MCF 10A (cell line): ENCODE measurements at regions of chr1 and their contacts with region 1.

Region 1: DNA sequence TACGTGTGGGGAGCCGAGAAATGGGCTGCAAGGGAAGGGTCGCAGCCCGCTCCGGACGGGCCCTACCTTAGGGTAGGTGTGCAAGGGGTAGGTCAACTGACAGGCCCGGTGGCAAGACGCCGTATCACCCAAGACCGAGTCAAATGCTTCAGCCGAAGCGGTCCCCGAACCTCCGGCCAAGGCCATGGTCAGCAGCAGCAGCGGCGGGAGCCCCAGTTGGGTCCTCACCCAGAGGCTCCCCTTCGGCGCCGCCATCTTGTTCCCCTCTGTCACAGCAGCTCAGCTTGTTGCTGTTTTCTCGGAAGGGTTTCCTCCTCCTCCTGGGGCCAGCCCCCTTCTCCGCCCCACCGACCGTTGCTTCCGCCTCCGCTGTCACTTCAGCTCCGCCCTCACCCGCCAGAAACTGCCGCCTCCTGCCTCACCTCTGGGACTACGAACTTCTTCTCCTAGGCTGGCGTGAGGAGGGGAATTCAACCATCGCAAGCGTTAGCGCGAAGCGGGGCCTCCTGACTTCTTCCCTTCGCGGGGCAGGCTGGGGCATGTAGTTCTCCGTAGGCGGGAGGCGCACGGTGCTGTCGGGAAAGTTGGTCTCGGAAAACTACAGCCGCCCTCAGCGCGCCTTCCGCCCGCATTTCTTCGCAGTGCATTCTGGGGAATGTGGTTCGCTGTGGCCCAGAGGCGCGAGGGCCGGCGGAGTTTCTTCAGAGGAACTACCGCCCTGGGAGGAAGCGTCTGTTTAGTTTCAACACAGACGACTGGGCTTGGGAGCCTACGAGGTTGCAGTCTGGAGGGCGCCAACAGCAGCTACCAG is at the starts of genes TCEANC2 and TMEM59:
- DNase-seq: peak; percentile 99
- H3K4me3 Mint-ChIP-seq: no peak within 1 kb of the TSS
- H3K27ac Mint-ChIP-seq: no peak within 1 kb of the TSS
- H3K4me1 Mint-ChIP-seq: peaks cover 13% of the 10 kb centered on the region
- H3K27me3 Mint-ChIP-seq: no peaks in the 10 kb centered on the region
- CTCF ChIP-seq: no peak
- total RNA-seq, gene TCEANC2: 3.6 and 6.0 TPM in 2 replicates
- total RNA-seq, gene TMEM59: 192 and 231 TPM in 2 replicates

Region 2: DNA sequence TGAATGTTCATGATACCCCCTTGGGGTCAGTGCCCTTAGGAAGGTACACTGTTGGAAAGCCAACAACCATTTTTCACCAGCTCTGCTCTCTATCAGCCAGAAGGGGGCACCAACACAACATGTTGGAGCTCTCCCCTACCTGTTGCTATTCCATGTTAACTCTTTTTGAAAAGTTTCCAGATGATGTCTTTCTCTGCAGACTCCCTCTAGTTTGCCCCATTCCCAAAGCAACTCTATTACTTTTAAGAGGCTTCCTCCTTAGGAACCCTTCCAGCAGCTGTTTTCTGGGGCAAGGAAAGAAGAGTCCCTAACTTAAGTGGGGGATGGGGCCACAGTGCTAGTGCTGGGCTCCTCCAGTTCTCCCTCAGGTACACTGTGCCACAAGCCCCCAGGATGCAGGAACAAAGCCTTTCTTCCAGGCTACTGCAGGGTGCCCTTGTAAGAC is 192.2 kb before region 1 on chr1:
- CTCF ChIA-PET with region 1: interaction called, 9 read pairs
- POLR2A ChIA-PET with region 1: interaction called, 8 read pairs
- intact Hi-C with region 1: loop called (anchors 1 kb)
- DNase-seq: peak; percentile 75
- H3K4me3 Mint-ChIP-seq: no peak overlapping the region
- H3K27ac Mint-ChIP-seq: no peak overlapping the region
- H3K4me1 Mint-ChIP-seq: no peaks in the 10 kb centered on the region
- H3K27me3 Mint-ChIP-seq: no peaks in the 10 kb centered on the region
- CTCF ChIP-seq: peak; percentile 82

Region 3: DNA sequence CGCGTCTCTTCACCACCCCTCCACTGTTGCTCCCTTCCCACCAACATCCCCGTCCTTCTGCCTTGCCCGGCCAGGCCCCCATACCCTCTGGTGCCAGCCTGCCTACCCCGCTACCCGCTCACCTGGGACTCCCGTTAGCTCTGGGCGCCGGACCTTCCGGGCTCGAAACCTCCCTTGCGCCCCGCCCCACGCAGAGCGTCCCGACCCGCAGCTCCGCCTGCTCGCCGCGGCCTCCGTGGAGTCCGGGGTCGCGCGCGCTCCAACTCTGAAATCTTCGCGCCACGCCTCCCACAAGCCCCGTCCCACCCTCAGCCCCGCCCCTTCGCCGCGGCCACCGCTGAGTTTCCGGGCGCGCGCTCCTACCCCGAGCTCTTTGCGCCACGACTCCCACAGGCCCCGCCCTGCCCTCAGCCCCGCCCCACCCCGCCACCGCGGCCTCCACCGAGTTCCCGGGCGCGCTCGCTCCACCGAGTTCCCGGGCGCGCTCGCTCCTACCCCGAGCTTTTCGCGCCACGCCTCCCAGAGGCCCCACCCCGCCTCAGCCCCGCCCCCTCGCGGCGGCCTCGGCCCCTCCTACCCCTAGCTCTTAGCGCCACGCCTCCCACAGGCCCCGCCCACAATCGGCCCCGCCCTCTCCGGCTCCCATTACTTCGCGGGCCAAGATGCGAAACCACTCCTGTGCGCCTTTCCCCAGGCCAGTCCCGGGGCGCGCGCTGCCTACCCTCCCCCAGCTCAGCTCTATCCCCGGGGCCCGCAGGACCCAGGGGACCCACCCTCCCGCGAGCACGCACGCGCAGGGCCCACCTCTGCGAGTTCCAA is 107.5 kb before region 1 on chr1 and contains the start of gene IFT25:
- CTCF ChIA-PET with region 1: interaction called, 3 read pairs
- POLR2A ChIA-PET with region 1: interaction called, 22 read pairs
- intact Hi-C with region 1: no loop called
- DNase-seq: peak; percentile 95
- H3K4me3 Mint-ChIP-seq: peak within 1 kb of the TSS; percentile 85
- H3K27ac Mint-ChIP-seq: peak within 1 kb of the TSS; percentile 75
- H3K4me1 Mint-ChIP-seq: peaks cover 36% of the 10 kb centered on the region
- H3K27me3 Mint-ChIP-seq: no peaks in the 10 kb centered on the region
- CTCF ChIP-seq: no peak
- total RNA-seq, gene IFT25: 20.6 and 22.3 TPM in 2 replicates

Region 4: DNA sequence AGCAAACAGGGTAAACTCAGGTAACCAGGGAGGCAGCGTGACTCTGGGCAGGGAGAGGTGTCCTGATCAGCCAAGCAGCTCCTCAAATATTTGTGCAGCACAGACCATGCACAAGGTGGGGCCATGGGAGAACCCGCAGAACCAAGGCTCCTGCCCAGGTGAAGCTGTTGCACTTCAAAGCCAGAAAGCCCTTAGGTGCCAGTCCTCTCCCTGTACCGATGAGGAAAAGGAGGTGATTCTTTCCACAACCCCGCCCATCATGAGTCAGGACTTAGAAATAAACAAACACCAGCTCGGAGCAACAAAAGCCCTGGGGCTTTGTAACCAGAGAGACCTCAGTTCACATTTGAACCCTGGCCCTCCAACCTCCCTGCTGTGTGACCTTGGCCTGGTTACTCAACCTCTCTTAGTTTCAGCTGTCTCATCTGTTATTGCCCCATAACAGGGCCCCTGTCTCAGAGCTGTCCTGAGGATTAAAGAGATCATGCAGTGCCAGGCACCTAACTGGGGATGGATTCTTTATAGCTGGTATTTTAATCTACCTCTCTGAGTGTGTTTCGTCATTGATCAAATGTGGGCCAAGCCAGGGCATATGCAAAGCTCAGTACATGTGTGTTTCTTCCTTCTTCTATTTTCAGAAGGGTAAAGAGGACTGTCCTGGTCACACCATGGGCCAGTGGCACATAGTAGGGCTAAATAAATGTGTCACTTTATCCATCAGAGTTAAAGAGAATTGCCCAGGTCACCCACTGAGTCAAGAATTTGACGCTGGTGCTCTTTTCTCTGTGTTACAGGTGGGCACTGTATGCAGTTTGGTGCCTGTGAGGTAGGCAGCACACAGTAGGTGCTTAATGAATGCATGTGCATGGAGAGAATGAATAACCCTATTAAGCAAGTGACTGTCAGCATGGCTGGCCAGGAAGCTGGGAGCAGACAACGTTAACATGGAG is 36.6 kb before region 1 on chr1:
- CTCF ChIA-PET with region 1: interaction called, 3 read pairs
- POLR2A ChIA-PET with region 1: interaction called, 25 read pairs
- intact Hi-C with region 1: no loop called
- DNase-seq: peak; percentile 92
- H3K4me3 Mint-ChIP-seq: no peak overlapping the region
- H3K27ac Mint-ChIP-seq: peak overlapping the region; percentile 82
- H3K4me1 Mint-ChIP-seq: peaks cover 13% of the 10 kb centered on the region
- H3K27me3 Mint-ChIP-seq: peaks cover 9% of the 10 kb centered on the region
- CTCF ChIP-seq: no peak

Region 5: GRCh38 chr1:54041806-54042205 is 11.3 kb before region 1 on chr1:
- CTCF ChIA-PET with region 1: interaction called, 3 read pairs
- POLR2A ChIA-PET with region 1: interaction called, 30 read pairs
- intact Hi-C with region 1: no loop called
- DNase-seq: no peak
- H3K4me3 Mint-ChIP-seq: no peak overlapping the region
- H3K27ac Mint-ChIP-seq: no peak overlapping the region
- H3K4me1 Mint-ChIP-seq: peaks cover 13% of the 10 kb centered on the region
- H3K27me3 Mint-ChIP-seq: no peaks in the 10 kb centered on the region
- CTCF ChIP-seq: no peak

Region 6: GRCh38 chr1:54406339-54407153 is 353.4 kb after region 1 on chr1 and contains the start of gene SSBP3:
- CTCF ChIA-PET with region 1: no interaction called
- POLR2A ChIA-PET with region 1: interaction called, 45 read pairs
- intact Hi-C with region 1: no loop called
- DNase-seq: peak; percentile 91
- H3K4me3 Mint-ChIP-seq: peak within 1 kb of the TSS; percentile 83
- H3K27ac Mint-ChIP-seq: peak within 1 kb of the TSS; percentile 96
- H3K4me1 Mint-ChIP-seq: peaks cover 28% of the 10 kb centered on the region
- H3K27me3 Mint-ChIP-seq: no peaks in the 10 kb centered on the region
- CTCF ChIP-seq: no peak
- total RNA-seq, gene SSBP3: 6.5 and 8.6 TPM in 2 replicates